Naive thymus-derived CD4-positive, alpha-beta T cell (primary cell): ENCODE measurements at regions of chr4 and their contacts with region 1.

Region 1: DNA sequence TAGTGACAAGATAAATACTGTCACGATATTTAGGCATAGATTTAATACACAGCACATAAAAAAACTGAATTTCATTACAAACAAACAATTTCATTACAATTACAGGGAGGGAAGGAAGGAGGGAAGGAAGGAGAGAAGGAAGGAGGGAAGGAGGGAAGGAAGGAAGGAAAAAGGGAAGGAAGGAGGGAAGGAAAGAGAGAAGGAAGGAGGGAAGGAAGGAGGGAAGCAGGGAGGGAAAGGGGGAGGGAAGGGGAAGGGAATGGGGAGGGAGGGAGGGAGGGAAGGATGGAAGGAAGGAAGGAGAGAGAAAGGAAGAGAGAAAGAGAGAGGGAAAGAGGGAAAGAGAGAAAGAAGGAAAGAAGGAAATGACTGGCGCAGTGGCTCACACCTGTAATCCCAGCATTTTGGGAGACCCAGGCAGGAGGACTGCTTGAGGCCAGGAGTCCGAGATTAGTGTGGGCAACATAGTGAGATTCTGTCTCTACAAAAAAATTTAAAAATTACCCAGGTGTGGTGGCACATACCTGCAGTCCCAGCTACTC is 64.6 kb downstream of the FBXW7 start:
- DNase-seq: no peak
- ATAC-seq: no peak
- H3K4me3 ChIP-seq: no peak overlapping the region
- H3K4me3 Mint-ChIP-seq: no peak overlapping the region
- H3K27ac ChIP-seq: no peak overlapping the region
- H3K27ac Mint-ChIP-seq: no peak overlapping the region
- H3K4me1 ChIP-seq: no peaks in the 10 kb centered on the region
- H3K4me1 Mint-ChIP-seq: peaks cover 12 to 36% (median 26%) of the 10 kb centered on the region in 7 donors
- H3K27me3 ChIP-seq: no peaks in the 10 kb centered on the region
- H3K27me3 Mint-ChIP-seq: no peaks in the 10 kb centered on the region

Region 2: GRCh38 chr4:151833174-151833573 is 638.1 kb before region 1 on chr4:
- CTCF ChIA-PET with region 1: no interaction called
- POLR2A ChIA-PET with region 1: no interaction called
- intact Hi-C with region 1: no loop called
- DNase-seq: no peak
- ATAC-seq: no peak
- H3K4me3 ChIP-seq: no peak overlapping the region
- H3K4me3 Mint-ChIP-seq: no peak overlapping the region
- H3K27ac ChIP-seq: no peak overlapping the region
- H3K27ac Mint-ChIP-seq: no peak overlapping the region
- H3K4me1 ChIP-seq: no peaks in the 10 kb centered on the region
- H3K4me1 Mint-ChIP-seq: peaks cover 0 to 5% (median 0%) of the 10 kb centered on the region in 7 donors
- H3K27me3 ChIP-seq: no peaks in the 10 kb centered on the region
- H3K27me3 Mint-ChIP-seq: peaks cover 0 to 10% (median 0%) of the 10 kb centered on the region in 5 donors

Region 3: GRCh38 chr4:152485726-152486276 is 14.5 kb after region 1 on chr4:
- CTCF ChIA-PET with region 1: no interaction called
- POLR2A ChIA-PET with region 1: interaction called, 3 read pairs
- intact Hi-C with region 1: loop called in 1 of 2 experiments (anchors 2 kb)
- DNase-seq: peak in 7 of 9 donors; percentile 10 to 49 (median 35)
- ATAC-seq: peak; percentile 97
- H3K4me3 ChIP-seq: no peak overlapping the region
- H3K4me3 Mint-ChIP-seq: peak overlapping the region in 2 of 10 donors; percentile 10 to 74
- H3K27ac ChIP-seq: no peak overlapping the region
- H3K27ac Mint-ChIP-seq: peak overlapping the region in 3 of 9 donors; percentile 30 to 79 (median 40)
- H3K4me1 ChIP-seq: peaks cover 0 to 13% of the 10 kb centered on the region in 2 donors
- H3K4me1 Mint-ChIP-seq: peaks cover 30 to 56% (median 45%) of the 10 kb centered on the region in 7 donors
- H3K27me3 ChIP-seq: no peaks in the 10 kb centered on the region
- H3K27me3 Mint-ChIP-seq: no peaks in the 10 kb centered on the region